Panc1 (cell line): ENCODE measurements at regions of chr1 and their contacts with region 1.

Region 1: DNA sequence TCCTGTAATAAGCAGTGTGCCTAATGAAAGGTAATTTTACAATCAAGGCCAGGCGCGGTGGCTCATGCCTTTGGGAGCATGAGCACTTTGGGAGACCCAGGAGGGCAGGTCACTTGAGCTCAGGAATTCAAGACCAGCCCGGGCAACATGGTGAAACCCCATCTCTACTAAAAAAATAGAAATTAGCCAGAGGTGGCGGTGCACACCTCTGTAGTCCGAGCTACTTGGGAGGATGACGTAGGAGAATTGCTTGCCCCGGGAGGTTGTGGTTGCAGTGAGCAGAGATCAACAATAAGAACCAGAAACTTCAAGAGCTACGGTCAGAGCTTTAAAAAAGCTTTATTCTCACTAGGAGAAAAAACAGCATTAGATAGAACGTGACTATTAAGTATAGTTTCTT is 35.0 kb downstream of the SFPQ start:
- DNase-seq: no peak
- ATAC-seq: no peak
- H3K4me3 ChIP-seq: no peak overlapping the region
- H3K27ac ChIP-seq: no peak overlapping the region
- H3K4me1 ChIP-seq: no peaks in the 10 kb centered on the region
- H3K27me3 ChIP-seq: no peaks in the 10 kb centered on the region
- CTCF ChIP-seq: no peak

Region 2: DNA sequence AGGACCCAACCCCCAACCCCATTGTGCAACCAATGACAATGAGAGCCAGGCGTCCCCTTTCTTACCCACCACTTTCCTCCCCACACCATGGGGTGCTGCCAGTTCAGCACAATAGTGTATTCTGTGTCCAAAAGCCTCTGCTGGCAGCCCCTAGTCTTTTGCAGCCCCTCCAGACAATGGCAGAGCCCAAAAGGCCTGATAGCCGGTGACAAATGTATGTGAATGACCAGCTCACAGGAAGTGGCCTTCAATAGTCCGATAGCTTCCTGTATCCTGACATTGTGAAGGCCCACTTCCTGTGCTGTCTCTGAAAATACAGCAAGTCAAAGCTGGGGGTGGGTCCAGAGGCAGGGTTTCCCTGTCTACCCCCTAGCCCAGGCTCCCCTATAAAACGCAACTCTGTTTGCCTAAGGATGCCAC is 314.9 kb before region 1 on chr1:
- CTCF ChIA-PET with region 1: no interaction called
- POLR2A ChIA-PET with region 1: no interaction called
- in situ Hi-C with region 1: no loop called
- intact Hi-C with region 1: no loop called
- DNase-seq: no peak
- ATAC-seq: no peak
- H3K4me3 ChIP-seq: no peak overlapping the region
- H3K27ac ChIP-seq: no peak overlapping the region
- H3K4me1 ChIP-seq: no peaks in the 10 kb centered on the region
- H3K27me3 ChIP-seq: no peaks in the 10 kb centered on the region
- CTCF ChIP-seq: no peak

Region 3: GRCh38 chr1:35047188-35047858 is 110.6 kb before region 1 on chr1:
- CTCF ChIA-PET with region 1: no interaction called
- POLR2A ChIA-PET with region 1: interaction called, 11 read pairs
- in situ Hi-C with region 1: no loop called
- intact Hi-C with region 1: no loop called
- DNase-seq: no peak
- ATAC-seq: peak; percentile 62; the same call in 1 of the 2 replicates
- H3K4me3 ChIP-seq: no peak overlapping the region
- H3K27ac ChIP-seq: no peak overlapping the region
- H3K4me1 ChIP-seq: no peaks in the 10 kb centered on the region
- H3K27me3 ChIP-seq: peaks cover 3% of the 10 kb centered on the region; the same call in 1 of the 2 replicates
- CTCF ChIP-seq: no peak

Region 4: DNA sequence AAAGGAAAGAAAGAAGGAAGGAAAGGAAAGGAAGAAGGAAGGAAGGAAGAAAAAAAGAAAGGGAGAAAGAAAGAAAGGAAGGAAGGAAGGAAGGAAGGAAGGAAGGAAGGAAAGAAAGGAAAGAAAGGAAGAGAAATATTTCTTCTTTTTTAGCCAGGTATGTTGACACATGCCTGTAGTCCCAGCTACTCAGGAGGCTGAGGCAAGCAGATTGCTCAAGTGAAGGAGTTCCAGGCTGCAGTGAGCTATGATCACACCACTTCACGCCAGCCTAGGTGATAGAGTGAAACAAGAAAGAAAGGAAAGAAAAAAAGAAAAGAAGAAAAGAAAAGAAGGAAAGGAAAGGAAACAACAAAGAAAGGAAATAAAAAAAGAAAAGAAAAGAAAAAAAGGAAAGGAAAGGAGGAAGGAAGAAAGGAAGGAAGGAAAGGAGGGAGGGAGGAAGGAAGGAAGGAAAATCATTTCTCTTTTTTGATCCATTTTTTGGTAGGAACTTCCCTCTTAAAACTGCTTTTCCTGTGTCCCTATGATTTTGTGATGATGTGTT is 84.6 kb before region 1 on chr1:
- CTCF ChIA-PET with region 1: interaction called, 23 read pairs
- POLR2A ChIA-PET with region 1: no interaction called
- in situ Hi-C with region 1: no loop called
- intact Hi-C with region 1: no loop called
- DNase-seq: no peak
- ATAC-seq: no peak
- H3K4me3 ChIP-seq: no peak overlapping the region
- H3K27ac ChIP-seq: no peak overlapping the region
- H3K4me1 ChIP-seq: no peaks in the 10 kb centered on the region
- H3K27me3 ChIP-seq: no peaks in the 10 kb centered on the region
- CTCF ChIP-seq: no peak

Region 5: GRCh38 chr1:35085421-35085820 is 72.5 kb before region 1 on chr1:
- CTCF ChIA-PET with region 1: no interaction called
- POLR2A ChIA-PET with region 1: no interaction called
- in situ Hi-C with region 1: no loop called
- intact Hi-C with region 1: no loop called
- DNase-seq: no peak
- ATAC-seq: no peak
- H3K4me3 ChIP-seq: no peak overlapping the region
- H3K27ac ChIP-seq: no peak overlapping the region
- H3K4me1 ChIP-seq: peaks cover 17% of the 10 kb centered on the region
- H3K27me3 ChIP-seq: no peaks in the 10 kb centered on the region
- CTCF ChIP-seq: no peak

Region 6: DNA sequence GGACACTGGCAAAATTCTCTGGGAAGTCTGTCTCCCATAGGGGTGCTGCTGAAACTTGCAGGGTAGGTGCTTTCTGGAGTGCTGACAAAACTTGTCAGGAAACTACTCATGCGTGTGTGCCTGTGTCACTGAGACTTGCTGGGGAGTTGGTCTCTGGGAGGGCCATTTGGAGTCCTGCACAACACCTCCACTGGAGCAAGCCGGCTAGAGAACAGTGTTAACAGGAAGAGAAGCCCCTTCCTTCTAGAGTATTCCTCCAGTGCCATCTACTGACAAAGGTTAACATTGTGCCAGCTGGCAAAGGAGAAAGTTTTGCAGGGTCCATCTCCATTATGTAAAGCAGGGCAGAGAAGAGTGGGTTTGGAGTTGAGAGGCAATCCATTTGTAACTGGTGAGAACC is 140.6 kb after region 1 on chr1:
- CTCF ChIA-PET with region 1: no interaction called
- POLR2A ChIA-PET with region 1: no interaction called
- in situ Hi-C with region 1: no loop called
- intact Hi-C with region 1: no loop called
- DNase-seq: peak; percentile 20
- ATAC-seq: peak; percentile 79
- H3K4me3 ChIP-seq: no peak overlapping the region
- H3K27ac ChIP-seq: no peak overlapping the region
- H3K4me1 ChIP-seq: no peaks in the 10 kb centered on the region
- H3K27me3 ChIP-seq: no peaks in the 10 kb centered on the region
- CTCF ChIP-seq: peak; percentile 64